GM12878 (cell line): ENCODE measurements at regions of chr1 and their contacts with region 1.

Region 1: DNA sequence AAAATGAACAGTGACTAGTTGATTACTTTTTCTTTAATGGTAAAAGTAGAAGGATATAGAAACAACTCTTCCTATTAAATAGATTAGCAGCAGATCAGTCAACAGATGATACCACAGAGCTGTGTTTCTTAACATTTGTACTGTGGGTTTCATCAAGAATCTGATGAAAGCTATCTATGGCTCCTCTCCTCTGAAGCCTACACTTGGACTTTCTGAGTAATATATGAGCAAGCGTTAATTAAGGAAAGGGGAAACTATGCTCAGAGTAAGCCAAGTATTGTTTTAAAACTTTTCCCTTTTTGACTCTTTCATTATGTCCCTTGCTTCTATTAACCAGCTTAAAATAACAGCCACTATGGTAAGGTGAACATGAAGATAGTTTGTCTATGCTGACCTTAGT is 10.8 kb downstream of the ARID4B start:
- DNase-seq: no peak
- ATAC-seq: peak; percentile 70
- H3K4me3 ChIP-seq: no peak overlapping the region
- H3K27ac ChIP-seq: no peak overlapping the region
- H3K4me1 ChIP-seq: peaks cover 6% of the 10 kb centered on the region; the same call in 1 of the 2 replicates
- H3K27me3 ChIP-seq: no peaks in the 10 kb centered on the region
- CTCF ChIP-seq: no peak
- EP300 ChIP-seq: no peak
- POLR2A ChIP-seq: no peak
- RAD21 ChIP-seq: no peak

Region 2: GRCh38 chr1:235122348-235122747 is 194.8 kb before region 1 on chr1:
- CTCF ChIA-PET with region 1: no interaction called
- POLR2A ChIA-PET with region 1: no interaction called
- RAD21 ChIA-PET with region 1: no interaction called
- SMC1A ChIA-PET with region 1: no interaction called
- in situ Hi-C with region 1: no loop called
- intact Hi-C with region 1: no loop called
- DNase-seq: no peak
- ATAC-seq: peak; percentile 41
- H3K4me3 ChIP-seq: peak overlapping the region; percentile 3; the same call in 1 of the 2 replicates
- H3K27ac ChIP-seq: no peak overlapping the region
- H3K4me1 ChIP-seq: no peaks in the 10 kb centered on the region
- H3K27me3 ChIP-seq: no peaks in the 10 kb centered on the region
- CTCF ChIP-seq: no peak
- EP300 ChIP-seq: no peak
- POLR2A ChIP-seq: no peak
- RAD21 ChIP-seq: no peak

Region 3: GRCh38 chr1:235199441-235199840 is 117.7 kb before region 1 on chr1:
- CTCF ChIA-PET with region 1: no interaction called
- POLR2A ChIA-PET with region 1: no interaction called
- RAD21 ChIA-PET with region 1: no interaction called
- SMC1A ChIA-PET with region 1: no interaction called
- in situ Hi-C with region 1: no loop called
- intact Hi-C with region 1: no loop called
- DNase-seq: no peak
- ATAC-seq: peak; percentile 67
- H3K4me3 ChIP-seq: no peak overlapping the region
- H3K27ac ChIP-seq: no peak overlapping the region
- H3K4me1 ChIP-seq: no peaks in the 10 kb centered on the region
- H3K27me3 ChIP-seq: no peaks in the 10 kb centered on the region
- CTCF ChIP-seq: peak in 2 of 3 experiments; percentile 24; a peak in 2 of 6 replicates
- EP300 ChIP-seq: no peak
- POLR2A ChIP-seq: no peak
- RAD21 ChIP-seq: no peak

Region 4: DNA sequence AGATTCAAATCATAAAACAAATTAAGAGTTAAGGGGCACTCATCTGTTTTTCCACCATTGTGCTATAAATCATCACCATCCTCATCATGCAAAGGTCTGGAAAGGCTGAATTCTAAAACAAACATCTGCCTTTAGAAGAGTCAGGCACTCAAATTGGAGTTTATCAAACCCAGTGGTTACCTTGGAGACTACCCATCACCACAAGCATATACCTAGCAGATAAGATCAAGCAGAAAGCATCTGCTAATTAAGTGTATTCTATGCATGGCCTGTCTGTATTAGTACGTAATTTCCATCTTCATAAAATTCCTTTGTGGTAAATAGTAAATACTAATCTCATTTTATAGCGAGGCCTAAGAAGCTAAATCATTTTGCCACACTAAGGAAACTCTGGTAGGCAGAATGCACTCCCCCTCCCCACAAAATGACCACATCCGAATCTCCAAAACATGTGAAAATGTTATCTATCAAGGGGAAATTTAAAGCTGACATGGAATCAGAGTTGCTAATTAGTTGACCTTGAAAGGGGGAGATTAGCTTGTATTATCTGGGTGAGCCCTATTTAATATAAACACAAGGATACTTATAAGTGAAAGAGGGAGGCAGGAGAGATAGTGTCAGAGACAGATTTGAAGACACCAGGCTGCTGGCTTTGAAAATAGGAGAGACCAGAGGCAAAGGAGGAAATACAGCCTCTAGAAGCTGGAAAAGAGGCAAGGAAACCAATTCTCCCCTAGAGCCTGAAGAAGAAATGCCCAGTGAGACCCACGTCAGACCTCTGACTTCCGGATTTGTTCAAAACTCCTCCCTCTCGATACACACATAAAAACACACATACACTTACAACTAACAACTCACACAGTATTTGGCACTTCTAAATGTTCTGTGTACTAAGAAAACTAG is 12.4 kb before region 1 on chr1:
- CTCF ChIA-PET with region 1: interaction called, 6 read pairs
- POLR2A ChIA-PET with region 1: interaction called, 5 read pairs
- RAD21 ChIA-PET with region 1: no interaction called
- SMC1A ChIA-PET with region 1: interaction called, 10 read pairs
- in situ Hi-C with region 1: no loop called
- intact Hi-C with region 1: no loop called
- DNase-seq: no peak
- ATAC-seq: peak; percentile 68
- H3K4me3 ChIP-seq: no peak overlapping the region
- H3K27ac ChIP-seq: no peak overlapping the region
- H3K4me1 ChIP-seq: no peaks in the 10 kb centered on the region
- H3K27me3 ChIP-seq: no peaks in the 10 kb centered on the region
- CTCF ChIP-seq: no peak
- EP300 ChIP-seq: no peak
- POLR2A ChIP-seq: no peak
- RAD21 ChIP-seq: no peak

Region 5: GRCh38 chr1:235583511-235584001 is 266.4 kb after region 1 on chr1:
- CTCF ChIA-PET with region 1: no interaction called
- POLR2A ChIA-PET with region 1: no interaction called
- RAD21 ChIA-PET with region 1: no interaction called
- SMC1A ChIA-PET with region 1: no interaction called
- in situ Hi-C with region 1: no loop called
- intact Hi-C with region 1: no loop called
- DNase-seq: no peak
- ATAC-seq: 0 out of 3 replicates have a peak, but pooled peaks have one; percentile 32
- H3K4me3 ChIP-seq: no peak overlapping the region
- H3K27ac ChIP-seq: no peak overlapping the region
- H3K4me1 ChIP-seq: no peaks in the 10 kb centered on the region
- H3K27me3 ChIP-seq: no peaks in the 10 kb centered on the region
- CTCF ChIP-seq: 0 out of 6 replicates have a peak, but pooled peaks of 1 of the 3 experiments have one; percentile 14
- EP300 ChIP-seq: no peak
- POLR2A ChIP-seq: no peak
- RAD21 ChIP-seq: no peak

Region 6: DNA sequence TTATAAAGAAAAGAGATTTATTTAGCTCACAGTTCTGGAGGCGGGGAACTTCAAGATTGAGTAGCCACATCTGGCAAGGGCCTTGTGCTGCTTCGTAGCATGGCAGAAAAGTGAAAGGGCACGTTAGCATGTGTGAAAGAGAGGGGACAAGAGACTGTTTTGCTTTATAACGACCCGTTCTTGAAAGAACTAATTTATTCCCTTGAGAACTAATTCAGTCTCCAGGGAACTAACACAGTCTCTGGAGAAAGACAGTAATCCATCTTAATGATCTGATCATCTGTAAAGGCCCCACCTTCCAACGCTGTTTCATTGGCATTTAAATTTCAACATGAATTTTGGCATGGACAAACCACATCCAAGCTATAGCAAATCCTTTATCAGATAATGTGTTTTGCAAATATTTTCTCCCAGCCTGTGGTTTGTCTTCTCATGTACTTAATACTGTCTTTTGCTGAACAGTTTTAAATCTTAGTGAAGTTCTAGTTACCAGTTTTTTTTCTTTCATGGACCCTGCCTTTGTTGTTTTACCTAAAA is 1504.0 kb after region 1 on chr1:
- CTCF ChIA-PET with region 1: no interaction called
- POLR2A ChIA-PET with region 1: no interaction called
- RAD21 ChIA-PET with region 1: no interaction called
- SMC1A ChIA-PET with region 1: no interaction called
- in situ Hi-C with region 1: no loop called
- intact Hi-C with region 1: no loop called
- DNase-seq: no peak
- ATAC-seq: no peak
- H3K4me3 ChIP-seq: no peak overlapping the region
- H3K27ac ChIP-seq: no peak overlapping the region
- H3K4me1 ChIP-seq: no peaks in the 10 kb centered on the region
- H3K27me3 ChIP-seq: no peaks in the 10 kb centered on the region
- CTCF ChIP-seq: no peak
- EP300 ChIP-seq: no peak
- POLR2A ChIP-seq: no peak
- RAD21 ChIP-seq: no peak